CD4-positive, alpha-beta T cell (primary cell): ENCODE measurements at regions of chr11 and their contacts with region 1.

Region 1: DNA sequence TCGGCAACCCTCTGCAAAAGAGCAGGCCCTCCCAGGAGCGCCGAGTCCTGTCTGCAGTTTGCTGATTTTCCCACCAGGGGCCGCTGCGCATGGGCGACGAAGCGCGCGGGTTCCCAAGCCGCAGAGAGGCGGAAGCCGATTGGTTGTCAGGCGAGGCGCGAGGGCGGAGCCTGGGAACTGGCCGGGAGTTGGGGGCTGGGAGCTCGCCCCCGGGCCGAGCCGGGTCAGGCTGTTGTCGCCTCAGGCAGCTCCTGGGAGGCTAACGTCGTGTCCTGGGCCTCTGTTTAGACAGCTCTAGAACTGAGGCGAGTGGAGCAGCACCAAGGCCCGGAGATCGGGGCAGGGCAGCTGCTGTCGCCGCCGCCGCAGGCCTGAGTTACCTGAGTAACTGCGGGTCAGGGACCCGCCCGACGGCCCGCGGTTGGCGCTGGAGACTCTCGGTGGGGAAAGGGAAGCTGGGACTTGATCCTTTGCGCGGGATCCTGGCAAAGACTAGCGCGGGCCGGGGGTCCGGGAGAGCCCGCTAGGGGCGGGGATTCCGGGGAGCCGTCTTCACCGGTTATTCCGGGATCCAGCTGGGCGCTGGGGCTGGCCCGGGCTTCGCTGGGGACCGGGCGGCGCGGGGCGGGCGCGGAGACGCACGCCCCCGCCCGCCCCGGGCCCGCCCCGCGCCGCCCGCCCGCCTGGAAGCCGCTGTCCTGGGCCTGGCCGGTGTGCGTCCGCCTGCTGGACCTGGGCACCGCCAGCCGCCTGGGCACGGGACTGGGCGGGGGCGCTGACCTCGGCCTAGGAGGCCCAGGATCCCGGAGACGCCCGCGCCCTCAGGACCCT is at the start of gene STIM1:
- DNase-seq: peak; percentile 92 to 99 (median 97)
- ATAC-seq: peak; percentile 69
- H3K4me3 ChIP-seq: peak within 1 kb of the TSS; percentile 95
- H3K4me3 Mint-ChIP-seq: peak within 1 kb of the TSS; percentile 89
- H3K27ac ChIP-seq: peak within 1 kb of the TSS; percentile 88 to 91
- H3K27ac Mint-ChIP-seq: peak within 1 kb of the TSS; percentile 99
- H3K4me1 ChIP-seq: peaks cover 63% of the 10 kb centered on the region
- H3K4me1 Mint-ChIP-seq: peaks cover 67% of the 10 kb centered on the region
- H3K27me3 ChIP-seq: no peaks in the 10 kb centered on the region
- H3K27me3 Mint-ChIP-seq: no peaks in the 10 kb centered on the region
- CTCF ChIP-seq: peak; percentile 94
- total RNA-seq, gene STIM1: 89.0 to 94.9 TPM

Region 2: DNA sequence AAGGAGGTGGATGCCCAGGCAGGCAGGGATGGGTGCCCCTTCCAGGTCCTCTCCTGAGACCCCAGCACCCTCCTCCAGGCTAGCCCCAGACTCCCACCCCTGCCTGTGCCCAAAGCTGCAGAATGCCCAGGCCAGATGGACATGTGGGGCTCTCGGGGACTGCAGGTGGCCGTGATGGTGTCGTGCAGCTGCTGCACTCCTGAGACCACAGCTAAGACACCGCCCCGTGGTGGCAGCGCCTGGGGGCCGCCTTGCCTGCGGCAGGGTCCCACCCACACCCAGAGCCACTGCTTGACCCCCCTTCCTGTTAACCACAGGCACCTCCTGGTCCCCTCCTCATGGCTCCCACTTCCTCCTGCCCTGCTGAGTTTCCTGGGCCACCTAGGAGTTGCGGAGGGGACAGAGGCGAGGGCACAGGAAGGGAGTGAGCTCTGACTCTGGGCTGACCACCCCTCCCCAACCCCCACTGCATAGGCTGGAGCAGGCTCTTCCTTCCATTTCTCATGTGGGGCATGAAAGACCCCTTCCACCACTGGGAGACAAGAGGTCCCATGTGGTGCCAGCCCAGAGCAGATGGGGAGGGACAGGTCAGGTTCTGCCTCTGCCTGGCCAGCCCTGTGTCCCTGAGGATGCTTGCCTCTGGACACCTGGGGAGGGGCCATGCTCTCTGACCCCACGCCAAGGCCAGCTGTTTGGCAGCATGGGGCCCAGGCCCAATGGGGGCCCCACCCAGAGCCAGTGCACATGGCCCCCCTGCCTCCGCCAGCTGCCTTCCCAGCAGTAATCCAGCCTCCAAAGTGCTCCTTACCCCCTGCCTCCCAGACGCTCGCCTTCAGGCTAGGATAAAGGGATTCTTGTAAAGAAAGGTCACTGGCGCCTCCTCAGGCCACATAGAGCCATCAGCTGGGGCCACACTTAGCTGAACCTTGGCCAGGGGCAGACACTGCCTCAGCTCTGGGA is 719.4 kb before region 1 on chr11:
- CTCF ChIA-PET with region 1: no interaction called
- POLR2A ChIA-PET with region 1: no interaction called
- intact Hi-C with region 1: no loop called
- DNase-seq: peak in 2 of 14 experiments; percentile 5 to 57
- ATAC-seq: no peak
- H3K4me3 ChIP-seq: no peak overlapping the region
- H3K4me3 Mint-ChIP-seq: no peak overlapping the region
- H3K27ac ChIP-seq: no peak overlapping the region
- H3K27ac Mint-ChIP-seq: no peak overlapping the region
- H3K4me1 ChIP-seq: peaks cover 14% of the 10 kb centered on the region
- H3K4me1 Mint-ChIP-seq: no peaks in the 10 kb centered on the region
- H3K27me3 ChIP-seq: no peaks in the 10 kb centered on the region
- H3K27me3 Mint-ChIP-seq: no peaks in the 10 kb centered on the region
- CTCF ChIP-seq: no peak

Region 3: DNA sequence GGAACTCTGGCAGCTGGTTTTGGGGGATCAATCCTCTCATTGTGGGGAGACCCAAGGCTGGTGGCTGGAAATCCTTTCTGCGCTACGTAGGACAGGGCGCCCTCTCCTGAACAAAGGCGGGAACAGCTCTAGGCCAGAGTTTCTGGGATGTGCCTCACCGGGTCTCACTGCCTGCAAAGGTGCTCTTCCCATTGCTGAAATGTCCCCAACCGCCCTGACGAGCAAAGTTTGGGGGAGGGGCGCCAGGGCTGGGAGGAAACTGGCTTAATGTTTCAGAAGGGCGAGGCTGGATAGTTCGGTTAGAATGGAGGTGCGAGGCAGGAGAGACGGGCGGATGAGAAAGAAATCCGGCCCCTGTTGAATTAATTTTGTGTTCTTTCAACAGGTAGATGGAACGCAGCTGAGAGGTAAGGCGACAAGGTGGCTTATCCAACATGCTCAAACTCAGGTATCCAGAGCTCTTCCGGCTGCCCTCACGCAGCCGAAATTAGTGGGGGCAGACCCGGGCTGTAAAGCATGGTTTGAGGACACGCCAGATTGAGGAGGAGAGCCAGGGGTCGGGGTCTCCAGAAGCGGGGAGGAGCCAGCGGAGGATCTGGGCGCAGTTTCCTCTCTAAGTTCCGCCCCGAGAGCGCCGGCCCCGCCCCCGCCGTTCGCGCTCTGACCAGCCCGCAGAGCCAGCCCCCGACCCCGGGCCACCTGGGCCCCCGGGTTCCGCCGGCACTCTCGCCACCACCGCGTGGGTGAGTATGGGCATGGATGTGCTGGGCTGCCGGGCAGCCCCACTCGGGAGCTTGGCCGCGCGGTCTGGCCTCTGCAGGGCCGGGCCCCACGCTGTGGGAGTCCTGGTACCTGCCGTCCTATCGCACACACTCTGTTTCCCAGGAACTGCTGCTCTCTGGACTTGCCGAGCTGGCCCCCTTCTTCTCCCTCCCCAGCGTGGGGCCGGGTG is 47.0 kb before region 1 on chr11 and contains the start of gene PGAP2:
- CTCF ChIA-PET with region 1: interaction called, 18 read pairs
- POLR2A ChIA-PET with region 1: interaction called, 24 read pairs
- intact Hi-C with region 1: no loop called
- DNase-seq: peak; percentile 27 to 77 (median 52)
- ATAC-seq: peak; percentile 74
- H3K4me3 ChIP-seq: peak within 1 kb of the TSS; percentile 96
- H3K4me3 Mint-ChIP-seq: peak within 1 kb of the TSS; percentile 95
- H3K27ac ChIP-seq: peak within 1 kb of the TSS in 1 of 2 donors; percentile 76
- H3K27ac Mint-ChIP-seq: peak within 1 kb of the TSS; percentile 84
- H3K4me1 ChIP-seq: peaks cover 21% of the 10 kb centered on the region
- H3K4me1 Mint-ChIP-seq: peaks cover 24% of the 10 kb centered on the region
- H3K27me3 ChIP-seq: no peaks in the 10 kb centered on the region
- H3K27me3 Mint-ChIP-seq: no peaks in the 10 kb centered on the region
- CTCF ChIP-seq: peak; percentile 63
- total RNA-seq, gene PGAP2: 20.9 to 23.6 TPM

Region 4: GRCh38 chr11:3880724-3881123 is 25.5 kb after region 1 on chr11:
- CTCF ChIA-PET with region 1: interaction called, 44 read pairs
- POLR2A ChIA-PET with region 1: interaction called, 22 read pairs
- intact Hi-C with region 1: loop called in 1 of 2 experiments (anchors 1 kb)
- DNase-seq: no peak
- ATAC-seq: no peak
- H3K4me3 ChIP-seq: no peak overlapping the region
- H3K4me3 Mint-ChIP-seq: no peak overlapping the region
- H3K27ac ChIP-seq: no peak overlapping the region
- H3K27ac Mint-ChIP-seq: peak overlapping the region; percentile 60
- H3K4me1 ChIP-seq: peaks cover 38% of the 10 kb centered on the region
- H3K4me1 Mint-ChIP-seq: peaks cover 80% of the 10 kb centered on the region
- H3K27me3 ChIP-seq: no peaks in the 10 kb centered on the region
- H3K27me3 Mint-ChIP-seq: no peaks in the 10 kb centered on the region
- CTCF ChIP-seq: no peak

Region 5: GRCh38 chr11:3927133-3927796 is 72.1 kb after region 1 on chr11:
- CTCF ChIA-PET with region 1: interaction called, 11 read pairs
- POLR2A ChIA-PET with region 1: interaction called, 6 read pairs
- intact Hi-C with region 1: no loop called
- DNase-seq: no peak
- ATAC-seq: no peak
- H3K4me3 ChIP-seq: no peak overlapping the region
- H3K4me3 Mint-ChIP-seq: no peak overlapping the region
- H3K27ac ChIP-seq: no peak overlapping the region
- H3K27ac Mint-ChIP-seq: peak overlapping the region; percentile 63
- H3K4me1 ChIP-seq: no peaks in the 10 kb centered on the region
- H3K4me1 Mint-ChIP-seq: peaks cover 59% of the 10 kb centered on the region
- H3K27me3 ChIP-seq: no peaks in the 10 kb centered on the region
- H3K27me3 Mint-ChIP-seq: no peaks in the 10 kb centered on the region
- CTCF ChIP-seq: no peak

Region 6: DNA sequence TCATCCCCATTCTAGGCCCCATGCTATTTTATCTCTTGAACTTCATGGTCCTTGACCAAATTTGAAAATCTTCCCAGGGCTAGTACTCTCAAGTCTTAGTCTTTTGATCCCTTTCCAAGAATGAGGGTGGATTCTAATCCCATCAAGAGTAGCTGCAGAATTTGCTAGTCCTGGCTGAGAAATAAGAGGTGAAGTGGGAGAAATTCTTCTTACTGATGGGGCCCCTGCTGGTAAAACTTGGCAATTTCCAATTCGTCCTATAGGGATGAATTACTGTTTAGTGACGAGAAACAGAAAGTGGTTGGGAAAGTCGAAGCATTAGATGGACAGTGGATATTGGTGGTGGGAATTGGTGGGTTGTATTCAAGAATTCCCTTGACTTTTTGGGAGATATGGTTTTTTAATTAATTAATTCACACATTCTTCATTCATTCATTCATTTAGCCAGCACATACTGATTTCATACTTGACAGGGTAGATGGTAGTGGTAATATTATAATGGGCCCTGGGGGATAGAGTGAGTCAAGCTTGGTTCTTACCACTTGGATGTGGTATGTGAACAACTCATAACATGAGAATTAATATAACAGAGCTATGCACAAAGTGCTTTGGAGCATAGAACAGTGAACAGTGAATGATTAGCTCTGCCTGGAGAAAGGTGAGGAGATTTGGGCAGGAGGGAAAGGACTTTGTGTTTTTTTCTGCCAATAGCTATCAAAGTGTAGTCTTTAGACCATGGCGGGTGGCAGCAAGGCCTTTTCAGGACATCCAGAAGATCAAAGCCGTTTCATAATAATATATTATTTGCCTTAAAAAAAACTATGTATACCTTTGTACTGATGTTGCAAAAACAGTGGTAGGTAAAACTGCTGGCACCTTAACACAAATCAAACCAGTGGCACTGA is 104.1 kb after region 1 on chr11:
- CTCF ChIA-PET with region 1: interaction called, 6 read pairs
- POLR2A ChIA-PET with region 1: interaction called, 14 read pairs
- intact Hi-C with region 1: no loop called
- DNase-seq: peak in 1 of 14 experiments; percentile 23
- ATAC-seq: no peak
- H3K4me3 ChIP-seq: no peak overlapping the region
- H3K4me3 Mint-ChIP-seq: no peak overlapping the region
- H3K27ac ChIP-seq: no peak overlapping the region
- H3K27ac Mint-ChIP-seq: peak overlapping the region; percentile 0
- H3K4me1 ChIP-seq: peaks cover 20% of the 10 kb centered on the region
- H3K4me1 Mint-ChIP-seq: peaks cover 84% of the 10 kb centered on the region
- H3K27me3 ChIP-seq: no peaks in the 10 kb centered on the region
- H3K27me3 Mint-ChIP-seq: no peaks in the 10 kb centered on the region
- CTCF ChIP-seq: peak; percentile 23

Region 7: DNA sequence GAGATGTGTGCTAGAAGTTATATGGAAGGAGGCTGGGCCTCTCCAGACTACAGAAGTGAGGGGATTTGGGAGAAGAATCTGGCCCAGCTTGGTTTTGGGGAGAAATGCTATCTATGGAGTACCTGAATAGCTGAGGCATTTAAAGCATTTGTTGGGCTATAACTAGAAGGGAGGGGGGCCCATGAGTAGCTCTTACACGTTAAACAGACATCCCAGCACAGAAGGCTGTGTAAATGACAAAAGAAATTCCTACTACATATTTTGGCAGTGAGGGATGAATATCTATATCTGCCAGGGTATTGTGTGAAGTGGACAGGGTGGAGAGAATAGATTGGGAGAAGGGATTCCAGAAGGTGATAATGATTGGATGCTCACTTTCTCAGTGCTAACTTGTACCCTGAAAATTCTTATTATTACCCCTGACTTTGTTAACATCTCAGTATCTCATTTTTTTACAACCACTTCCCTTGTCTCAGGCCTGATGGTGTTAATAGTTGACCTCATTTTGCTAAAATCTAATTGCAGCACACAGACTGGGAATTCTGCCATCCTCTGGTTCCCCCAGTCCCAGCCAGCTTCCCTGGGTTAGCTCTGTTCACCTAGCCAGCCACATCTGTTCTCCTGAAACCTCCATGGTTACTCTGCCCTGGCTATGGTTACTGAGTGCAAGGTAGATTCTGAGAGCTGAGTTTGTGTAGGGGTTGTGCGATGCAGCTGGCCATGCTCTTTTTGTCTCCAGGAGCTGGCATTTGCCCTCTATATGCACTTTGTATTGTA is 210.6 kb after region 1 on chr11:
- CTCF ChIA-PET with region 1: interaction called, 52 read pairs
- POLR2A ChIA-PET with region 1: interaction called, 76 read pairs
- intact Hi-C with region 1: no loop called
- DNase-seq: no peak
- ATAC-seq: no peak
- H3K4me3 ChIP-seq: no peak overlapping the region
- H3K4me3 Mint-ChIP-seq: no peak overlapping the region
- H3K27ac ChIP-seq: no peak overlapping the region
- H3K27ac Mint-ChIP-seq: peak overlapping the region; percentile 69
- H3K4me1 ChIP-seq: peaks cover 48% of the 10 kb centered on the region
- H3K4me1 Mint-ChIP-seq: peaks cover 70% of the 10 kb centered on the region
- H3K27me3 ChIP-seq: no peaks in the 10 kb centered on the region
- H3K27me3 Mint-ChIP-seq: no peaks in the 10 kb centered on the region
- CTCF ChIP-seq: no peak